CD4-positive, alpha-beta T cell (primary cell): ENCODE measurements at regions of chr7 and their contacts with region 1.

Region 1: GRCh38 chr7:92815412-92815811 is 21.0 kb downstream of the CDK6 start:
- DNase-seq: peak in 1 of 14 experiments; percentile 33
- ATAC-seq: no peak
- H3K4me3 ChIP-seq: no peak overlapping the region
- H3K4me3 Mint-ChIP-seq: no peak overlapping the region
- H3K27ac ChIP-seq: no peak overlapping the region
- H3K27ac Mint-ChIP-seq: no peak overlapping the region
- H3K4me1 ChIP-seq: no peaks in the 10 kb centered on the region
- H3K4me1 Mint-ChIP-seq: peaks cover 48% of the 10 kb centered on the region
- H3K27me3 ChIP-seq: no peaks in the 10 kb centered on the region
- H3K27me3 Mint-ChIP-seq: no peaks in the 10 kb centered on the region
- CTCF ChIP-seq: no peak

Region 2: DNA sequence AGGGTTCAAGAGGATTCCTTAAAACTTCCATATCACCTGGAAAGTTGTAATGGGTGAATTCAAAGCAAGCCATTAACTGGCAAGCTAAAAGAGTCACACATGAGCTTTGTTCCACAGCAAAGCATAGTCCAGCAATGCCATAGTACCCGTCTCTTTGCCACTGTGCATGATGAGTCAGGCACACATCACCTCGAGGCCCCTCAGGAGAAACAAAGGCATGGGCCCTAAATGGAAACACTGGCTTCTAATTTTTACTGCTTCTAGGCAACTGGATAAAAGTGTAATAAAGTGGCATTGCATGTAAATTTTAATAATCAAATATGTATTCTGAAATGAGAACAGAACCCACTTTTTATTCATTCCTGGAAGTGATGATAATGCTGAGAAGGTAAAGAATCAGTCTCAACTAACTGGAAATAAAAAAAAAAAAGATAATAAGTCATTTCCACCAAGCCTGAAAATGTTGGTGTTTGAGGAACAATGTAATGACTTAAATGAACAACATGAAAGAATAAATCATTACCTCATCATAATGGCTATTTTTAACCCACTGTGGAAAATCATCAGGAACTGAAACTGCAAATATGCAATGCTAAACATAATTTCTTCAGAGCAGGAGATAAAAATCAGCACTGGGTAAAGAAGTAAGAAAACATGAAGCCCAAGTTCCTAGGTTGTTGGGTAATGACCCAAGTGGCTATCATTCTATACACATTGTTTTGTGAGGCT is 83.9 kb before region 1 on chr7:
- CTCF ChIA-PET with region 1: no interaction called
- POLR2A ChIA-PET with region 1: no interaction called
- intact Hi-C with region 1: loop called in 1 of 2 experiments (anchors 5 kb)
- DNase-seq: peak in 3 of 14 experiments; percentile 24 to 41 (median 32)
- ATAC-seq: no peak
- H3K4me3 ChIP-seq: no peak overlapping the region
- H3K4me3 Mint-ChIP-seq: no peak overlapping the region
- H3K27ac ChIP-seq: no peak overlapping the region
- H3K27ac Mint-ChIP-seq: no peak overlapping the region
- H3K4me1 ChIP-seq: peaks cover 3% of the 10 kb centered on the region
- H3K4me1 Mint-ChIP-seq: peaks cover 11% of the 10 kb centered on the region
- H3K27me3 ChIP-seq: no peaks in the 10 kb centered on the region
- H3K27me3 Mint-ChIP-seq: no peaks in the 10 kb centered on the region
- CTCF ChIP-seq: no peak